Dendritic cell treated with granulocyte-macrophage colony-stimulating factor and Interleukin-4, amounts not matched to agents 40 ng/mL and 50 ng/mL, for 4 days (primary cell): ENCODE measurements at regions of chr2 and their contacts with region 1.

Region 1: GRCh38 chr2:69200107-69200520 is 186.9 kb downstream of the GFPT1 start:
- H3K4me3 Mint-ChIP-seq: no peak overlapping the region
- H3K27ac Mint-ChIP-seq: no peak overlapping the region
- H3K4me1 Mint-ChIP-seq: peaks cover 6% of the 10 kb centered on the region
- H3K27me3 Mint-ChIP-seq: peaks cover 9% of the 10 kb centered on the region

Region 2: GRCh38 chr2:69054431-69054830 is 145.7 kb before region 1 on chr2:
- intact Hi-C with region 1: loop called (anchors 10 kb)
- H3K4me3 Mint-ChIP-seq: no peak overlapping the region
- H3K27ac Mint-ChIP-seq: no peak overlapping the region
- H3K4me1 Mint-ChIP-seq: no peaks in the 10 kb centered on the region
- H3K27me3 Mint-ChIP-seq: peaks cover 1% of the 10 kb centered on the region

Region 3: DNA sequence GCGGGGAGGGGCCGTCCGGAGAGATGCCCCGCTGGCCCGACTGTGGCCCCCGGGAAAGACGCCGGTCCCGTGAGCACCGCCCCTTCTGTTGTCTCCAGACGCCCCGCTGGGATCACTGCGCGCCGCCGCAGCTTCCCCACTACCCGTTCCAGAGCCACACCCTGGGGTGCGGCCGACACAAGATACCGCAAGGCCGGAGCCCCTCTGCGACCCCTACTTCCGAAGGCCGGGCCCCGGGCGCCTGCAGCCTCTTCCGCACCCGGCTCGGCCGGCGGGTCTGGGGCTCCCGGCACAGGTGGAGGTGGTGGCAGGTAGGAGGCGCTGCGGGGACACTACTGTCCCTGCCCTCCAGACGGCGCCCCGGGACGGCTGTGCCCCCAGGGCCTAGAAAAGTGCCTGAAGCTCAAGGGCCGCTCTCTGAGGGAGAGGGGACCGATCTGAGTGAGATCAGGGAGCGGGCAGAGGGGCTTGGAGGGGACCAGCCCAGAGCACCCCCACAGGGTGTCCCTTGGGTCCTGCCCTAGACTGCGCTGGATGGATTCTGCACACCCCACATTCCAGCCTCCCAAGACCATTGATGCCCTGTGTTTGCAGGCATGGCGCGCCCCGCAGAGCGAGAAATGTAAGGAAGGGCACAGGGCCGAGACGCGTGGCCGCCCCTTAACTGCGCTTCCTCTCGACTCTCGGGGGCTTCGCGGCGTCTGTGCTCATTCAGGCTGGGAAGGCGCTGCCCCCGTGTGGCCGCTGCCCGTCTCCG is 106.9 kb after region 1 on chr2:
- intact Hi-C with region 1: loop called (anchors 10 kb)
- H3K4me3 Mint-ChIP-seq: peak overlapping the region; percentile 83
- H3K27ac Mint-ChIP-seq: peak overlapping the region; percentile 75
- H3K4me1 Mint-ChIP-seq: peaks cover 18% of the 10 kb centered on the region
- H3K27me3 Mint-ChIP-seq: peaks cover 38% of the 10 kb centered on the region